Kidney (tissue), 22 donors: ENCODE measurements at regions of chr17 and their contacts with region 1.

Region 1: DNA sequence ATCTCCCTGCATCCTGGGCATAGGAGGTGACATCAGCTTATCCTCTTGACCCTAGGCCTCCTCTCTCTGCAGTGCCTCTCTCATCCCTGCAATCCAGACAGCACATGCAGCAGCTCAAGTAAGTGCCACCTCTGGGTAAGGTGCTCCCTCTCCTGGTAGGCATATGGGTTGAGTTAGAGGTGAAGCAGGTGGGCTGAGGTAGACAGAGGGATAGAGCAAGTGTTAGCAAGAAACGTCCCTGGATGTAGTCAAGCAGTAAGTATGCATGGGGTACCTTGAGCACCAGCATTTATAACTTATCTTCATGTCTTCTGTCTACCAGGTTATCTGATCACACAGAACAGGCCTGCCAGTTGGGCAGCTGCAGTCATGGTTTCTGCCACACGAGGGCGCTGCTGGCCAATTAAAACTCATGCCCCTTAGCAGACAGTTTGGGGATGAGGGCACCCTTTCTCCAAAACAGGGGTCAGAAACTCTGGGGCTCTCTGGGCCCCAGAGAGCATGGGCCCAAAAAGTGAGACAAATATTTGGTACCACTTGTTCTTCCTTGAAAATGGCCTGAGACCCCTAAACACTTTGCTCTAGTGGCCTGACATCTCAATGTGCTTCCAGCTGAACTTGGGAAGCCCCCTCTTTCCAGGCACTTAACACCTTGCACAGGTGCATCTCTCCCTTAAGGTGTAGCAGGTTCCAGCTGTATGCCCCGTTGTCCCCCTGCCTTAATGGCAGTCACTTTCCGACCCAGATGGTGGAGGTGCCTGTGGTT is 59.8 kb downstream of the NEUROD2 start:
- DNase-seq: peak in 4 of 5 donors; percentile 49 to 64 (median 58)
- H3K4me3 ChIP-seq: no peak overlapping the region
- H3K27ac ChIP-seq: no peak overlapping the region
- H3K4me1 ChIP-seq: no peaks in the 10 kb centered on the region
- H3K27me3 ChIP-seq: no peaks in the 10 kb centered on the region
- CTCF ChIP-seq: peak; percentile 68

Region 2: DNA sequence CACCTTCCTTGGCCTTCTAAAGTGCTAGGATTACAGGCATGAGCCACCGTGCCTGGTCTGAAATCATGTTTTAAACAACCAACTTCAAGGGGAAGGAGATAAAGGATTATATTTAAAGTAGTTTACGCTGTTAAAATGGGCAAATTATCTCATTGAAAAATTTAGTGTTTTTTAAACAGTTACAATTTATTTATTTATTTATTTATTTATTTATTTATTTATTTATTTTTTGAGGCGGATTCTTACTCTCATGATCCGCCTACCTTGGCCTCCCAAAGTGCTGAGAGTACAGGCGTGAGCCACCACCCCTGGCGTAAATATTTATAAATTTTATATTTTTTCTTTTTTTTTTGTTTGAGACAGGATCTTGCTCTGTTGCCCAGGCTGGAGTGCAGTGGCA is 64.4 kb before region 1 on chr17:
- intact Hi-C with region 1: no loop called
- DNase-seq: no peak
- H3K4me3 ChIP-seq: no peak overlapping the region
- H3K27ac ChIP-seq: no peak overlapping the region
- H3K4me1 ChIP-seq: no peaks in the 10 kb centered on the region
- H3K27me3 ChIP-seq: no peaks in the 10 kb centered on the region
- CTCF ChIP-seq: no peak

Region 3: DNA sequence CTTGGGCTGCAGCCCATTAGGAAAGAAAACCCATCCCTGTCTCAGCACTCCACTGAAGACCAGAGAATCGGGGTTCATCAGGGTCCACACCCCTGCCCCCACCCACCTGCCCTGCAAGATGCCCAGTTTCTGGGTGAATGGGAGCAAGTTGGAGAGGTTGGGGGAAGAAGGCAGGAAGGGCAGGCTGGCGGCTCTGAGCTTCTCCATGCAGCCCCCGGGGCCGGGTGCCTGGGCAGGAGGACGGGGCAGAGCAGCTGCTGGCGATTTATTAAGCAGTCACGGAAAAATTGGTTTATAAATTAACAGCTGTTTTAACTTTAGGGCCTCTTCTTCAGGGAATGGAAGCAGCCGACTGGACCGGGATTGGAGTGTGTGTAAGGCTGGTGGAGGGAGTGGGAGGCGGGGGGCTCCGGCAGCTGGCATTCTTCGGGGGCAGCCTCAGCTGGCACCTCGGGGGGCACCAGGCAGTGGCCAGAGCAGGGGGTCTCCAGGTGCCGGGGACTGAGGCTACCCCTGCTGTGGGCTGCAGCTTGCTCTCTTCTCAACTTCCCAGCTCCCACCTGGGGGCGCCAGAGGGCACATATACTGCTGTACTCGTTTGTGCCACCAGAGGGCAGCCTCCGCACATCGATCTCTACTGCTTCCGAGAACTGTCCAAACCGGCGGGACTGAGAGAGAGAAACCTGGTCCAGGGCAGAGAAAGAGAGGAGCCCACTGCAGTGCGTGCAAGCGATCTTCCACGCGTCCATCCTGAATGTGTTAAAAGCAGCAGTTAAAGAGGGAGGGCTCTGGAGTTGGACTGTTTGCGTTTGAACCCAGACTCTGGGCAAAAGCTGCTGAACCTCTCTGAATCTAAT is 73.9 kb after region 1 on chr17:
- intact Hi-C with region 1: loop called (anchors 10 kb)
- DNase-seq: peak; percentile 91 to 94 (median 93)
- H3K4me3 ChIP-seq: no peak overlapping the region
- H3K27ac ChIP-seq: no peak overlapping the region
- H3K4me1 ChIP-seq: peaks cover 0 to 9% (median 3%) of the 10 kb centered on the region in 3 donors
- H3K27me3 ChIP-seq: peaks cover 4% of the 10 kb centered on the region
- CTCF ChIP-seq: peak; percentile 100